ENCODE measurements at regions of chr4 and their contacts with region 1.

Region 1: DNA sequence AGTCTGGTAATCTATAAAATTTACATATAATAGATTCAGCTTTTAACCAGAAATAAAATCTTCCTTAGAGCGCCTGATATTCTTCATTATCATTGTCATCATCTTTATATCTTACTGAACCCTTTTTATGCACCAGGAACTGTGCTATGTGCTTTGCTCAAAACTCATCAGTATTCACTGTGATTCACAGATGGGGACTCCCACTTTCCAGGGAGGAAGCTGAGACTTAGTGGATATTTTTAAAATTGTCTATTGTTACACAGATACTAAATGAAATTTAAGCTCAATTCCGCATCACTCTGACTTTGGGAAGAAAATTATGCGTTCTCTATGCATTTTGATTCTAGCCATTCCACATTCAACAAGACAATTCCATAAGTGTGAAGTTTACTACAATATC is 34.8 kb upstream of the SULT1E1 start:
- DNase-seq: no peak
- ATAC-seq: no peak
- H3K4me3 ChIP-seq: no peak overlapping the region
- H3K4me3 Mint-ChIP-seq: no peak overlapping the region
- H3K27ac ChIP-seq: no peak overlapping the region
- H3K27ac Mint-ChIP-seq: no peak overlapping the region
- H3K4me1 ChIP-seq: no peaks in the 10 kb centered on the region
- H3K4me1 Mint-ChIP-seq: no peaks in the 10 kb centered on the region
- H3K27me3 ChIP-seq: no peaks in the 10 kb centered on the region
- H3K27me3 Mint-ChIP-seq: peaks cover 12% of the 10 kb centered on the region
- CTCF ChIP-seq: no peak

Region 2: DNA sequence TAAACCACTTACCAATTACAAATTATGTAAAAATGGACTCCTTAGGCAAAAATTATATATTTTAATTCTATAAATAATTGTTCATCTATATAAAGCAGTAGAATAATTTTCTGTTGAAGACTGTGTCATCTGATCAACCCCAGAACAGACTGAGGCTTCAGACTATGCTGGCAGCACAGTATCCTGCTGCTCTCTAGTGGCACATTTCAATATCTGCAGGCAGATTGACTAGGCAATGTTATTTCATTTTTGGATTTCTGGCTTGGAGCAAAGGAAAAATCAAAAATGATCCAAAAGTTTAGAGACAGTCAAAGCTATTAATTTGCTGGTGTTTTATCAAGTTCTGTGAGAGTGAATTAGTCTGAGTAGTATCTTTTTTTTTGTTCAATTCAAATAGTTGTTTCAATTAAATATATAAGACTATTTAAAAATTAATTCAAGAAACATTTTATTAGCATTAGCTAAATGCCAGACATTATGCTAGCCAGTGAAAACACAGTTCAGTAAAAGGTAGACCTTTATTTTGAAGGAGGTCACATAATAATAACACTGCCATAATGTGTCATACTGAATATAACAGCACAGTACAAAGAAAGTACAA is 13.4 kb before region 1 on chr4:
- CTCF ChIA-PET with region 1: interaction called, 11 read pairs
- POLR2A ChIA-PET with region 1: no interaction called
- intact Hi-C with region 1: no loop called
- DNase-seq: peak in 4 of 9 experiments; percentile 13 to 57 (median 24)
- ATAC-seq: peak; percentile 78
- H3K4me3 ChIP-seq: no peak overlapping the region
- H3K4me3 Mint-ChIP-seq: no peak overlapping the region
- H3K27ac ChIP-seq: no peak overlapping the region
- H3K27ac Mint-ChIP-seq: no peak overlapping the region
- H3K4me1 ChIP-seq: no peaks in the 10 kb centered on the region
- H3K4me1 Mint-ChIP-seq: no peaks in the 10 kb centered on the region
- H3K27me3 ChIP-seq: no peaks in the 10 kb centered on the region
- H3K27me3 Mint-ChIP-seq: no peaks in the 10 kb centered on the region
- CTCF ChIP-seq: peak; percentile 90

Measured in CD8-positive, alpha-beta T cell (primary cell).